ENCODE measurements at regions of chr2 and their contacts with region 1.

Region 1: DNA sequence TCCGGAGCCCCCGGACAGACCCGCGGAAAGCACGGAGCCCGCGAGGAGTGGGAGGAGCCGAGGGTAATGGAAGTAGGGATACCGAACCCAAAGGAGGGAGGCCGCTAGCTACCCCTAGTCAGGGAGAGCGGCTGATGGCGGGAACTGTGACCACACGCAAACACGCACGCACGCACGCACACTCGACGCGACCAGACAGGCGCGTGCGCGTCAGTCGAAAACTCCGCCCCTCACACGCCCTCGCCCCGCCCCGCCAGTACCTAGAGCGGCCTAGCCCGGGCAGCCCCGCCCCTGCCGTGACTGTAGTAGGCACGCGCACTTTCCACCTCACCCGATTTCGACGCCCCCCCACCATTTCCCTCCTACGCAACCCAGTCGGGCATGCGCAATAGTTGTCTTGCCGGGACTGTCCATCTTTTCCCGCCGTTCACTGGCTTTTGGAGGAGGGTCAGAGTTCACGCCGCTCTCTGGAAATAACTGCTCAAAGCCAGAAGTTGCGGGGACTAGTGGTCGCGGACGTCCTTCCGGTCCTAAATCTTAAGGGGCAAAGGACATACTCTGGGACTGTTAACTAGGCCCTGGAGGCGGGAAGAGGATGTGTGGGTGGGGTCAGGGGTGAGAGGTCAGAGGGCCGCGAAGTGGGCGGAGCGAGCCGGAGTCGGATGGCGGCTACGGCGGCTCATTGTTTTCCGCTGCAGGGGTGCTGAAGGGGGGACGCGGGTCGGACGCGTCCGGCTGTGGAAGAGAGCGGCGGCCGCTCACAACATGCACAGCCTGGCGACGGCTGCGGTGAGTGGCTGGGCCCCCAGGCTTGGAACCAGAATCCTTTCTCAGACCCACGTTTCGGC is at the starts of genes CNOT9 and USP37:
- DNase-seq: peak; percentile 100
- ATAC-seq: peak; percentile 99
- total RNA-seq, gene CNOT9: 15.7 TPM
- total RNA-seq, gene USP37: 7.0 TPM

Region 2: GRCh38 chr2:218286570-218287459 is 281.6 kb before region 1 on chr2:
- intact Hi-C with region 1: loop called (anchors 10 kb)
- DNase-seq: peak; percentile 93
- ATAC-seq: peak; percentile 89

Region 3: GRCh38 chr2:218406209-218406948 is 162.0 kb before region 1 on chr2:
- intact Hi-C with region 1: loop called (anchors 2 kb)
- DNase-seq: peak; percentile 98
- ATAC-seq: peak; percentile 88

Region 4: DNA sequence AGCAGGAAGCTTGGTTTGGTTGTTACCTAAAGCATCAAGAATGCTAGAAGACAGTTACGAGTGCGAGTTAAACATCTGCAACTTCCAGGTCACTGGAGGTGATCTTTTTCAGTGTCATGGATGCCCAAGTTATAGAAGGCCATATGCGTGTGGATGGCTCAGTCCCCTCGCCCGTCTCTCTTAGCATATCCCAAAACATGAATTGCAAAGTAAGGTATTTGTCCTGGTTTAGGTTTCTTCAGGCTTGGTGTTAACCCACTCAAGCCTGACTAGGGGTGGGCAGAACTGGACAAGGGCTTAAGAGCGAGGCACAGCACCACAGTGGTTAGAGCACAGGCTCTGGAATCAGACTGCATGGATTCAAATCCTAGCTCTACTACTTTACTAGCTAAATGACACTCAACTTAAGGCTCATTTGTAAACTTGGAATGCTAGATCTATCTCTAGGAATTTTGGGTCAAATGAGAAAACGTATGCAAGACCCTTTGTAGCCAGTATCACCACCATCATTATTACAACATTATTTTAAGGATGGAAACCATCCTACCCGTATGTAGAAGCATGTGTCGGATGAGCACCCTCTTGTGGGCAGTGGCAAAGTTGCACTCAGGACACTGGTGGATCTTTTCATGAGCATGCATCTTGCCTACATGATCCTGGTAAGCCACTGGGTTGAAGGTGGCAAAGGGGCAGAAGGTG is 79.8 kb after region 1 on chr2:
- intact Hi-C with region 1: loop called (anchors 5 kb)
- DNase-seq: no peak
- ATAC-seq: peak; percentile 53

Region 5: GRCh38 chr2:218984239-218985020 is 416.0 kb after region 1 on chr2:
- intact Hi-C with region 1: no loop called
- DNase-seq: no peak
- ATAC-seq: no peak

Measured in Right ventricle myocardium inferior (tissue), 1 donor.